CD8-positive, alpha-beta T cell (primary cell): ENCODE measurements at regions of chr2 and their contacts with region 1.

Region 1: DNA sequence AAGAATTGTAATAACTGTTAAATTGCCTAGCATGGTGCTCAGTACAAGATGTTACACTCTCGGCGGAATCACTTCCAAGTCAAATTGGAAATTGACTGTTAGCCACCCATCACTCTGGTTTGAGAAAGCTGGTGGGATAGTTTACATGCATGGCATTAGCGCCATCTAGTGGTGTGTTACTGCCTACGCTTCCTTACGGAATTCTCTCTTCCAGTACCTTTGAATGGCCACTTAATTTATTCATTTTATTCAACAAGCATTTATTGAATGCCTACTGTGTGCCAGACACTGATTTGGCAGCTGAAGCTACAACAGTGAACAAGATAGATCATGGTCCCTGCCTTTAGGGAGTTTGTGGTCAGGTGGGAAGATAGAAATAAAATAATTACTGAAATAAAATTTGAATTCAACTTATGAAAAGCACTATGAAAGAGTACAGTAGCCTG is 171.2 kb downstream of the TMEM247 start:
- DNase-seq: peak; percentile 41 to 86 (median 70)
- ATAC-seq: peak; percentile 84
- H3K4me3 ChIP-seq: no peak overlapping the region
- H3K4me3 Mint-ChIP-seq: no peak overlapping the region
- H3K27ac ChIP-seq: no peak overlapping the region
- H3K27ac Mint-ChIP-seq: no peak overlapping the region
- H3K4me1 ChIP-seq: no peaks in the 10 kb centered on the region
- H3K4me1 Mint-ChIP-seq: no peaks in the 10 kb centered on the region
- H3K27me3 ChIP-seq: no peaks in the 10 kb centered on the region
- H3K27me3 Mint-ChIP-seq: no peaks in the 10 kb centered on the region
- CTCF ChIP-seq: peak; percentile 94

Region 2: DNA sequence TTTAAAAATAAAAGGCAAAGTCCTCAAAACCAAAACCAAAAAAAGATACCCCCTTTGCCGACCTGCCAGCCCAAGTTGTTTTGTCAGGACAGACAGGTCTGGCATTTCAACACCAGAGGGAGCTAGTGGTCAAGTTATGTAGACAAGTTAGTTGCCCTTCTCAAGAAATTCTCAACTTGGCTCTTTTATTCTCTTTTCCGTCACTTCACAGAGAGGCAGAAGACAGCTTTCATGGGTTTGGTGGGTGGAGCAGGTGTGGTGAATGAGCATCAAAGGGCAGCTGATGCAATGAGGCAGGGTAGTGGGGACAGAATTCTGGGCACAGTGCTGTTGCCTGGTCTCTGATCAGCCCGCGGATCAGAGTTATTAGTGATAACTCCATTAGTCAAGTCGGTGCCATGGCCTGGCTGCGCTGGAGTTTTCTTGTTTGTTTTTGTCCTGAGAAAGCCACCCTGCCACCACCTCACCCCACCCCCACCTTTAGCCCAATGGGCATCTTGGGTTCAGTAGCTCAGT is 657.0 kb before region 1 on chr2:
- CTCF ChIA-PET with region 1: interaction called, 16 read pairs
- POLR2A ChIA-PET with region 1: interaction called, 3 read pairs
- intact Hi-C with region 1: loop called (anchors 1 to 5 kb)
- DNase-seq: peak; percentile 12 to 79 (median 58)
- ATAC-seq: peak; percentile 75
- H3K4me3 ChIP-seq: no peak overlapping the region
- H3K4me3 Mint-ChIP-seq: no peak overlapping the region
- H3K27ac ChIP-seq: no peak overlapping the region
- H3K27ac Mint-ChIP-seq: no peak overlapping the region
- H3K4me1 ChIP-seq: peaks cover 4% of the 10 kb centered on the region
- H3K4me1 Mint-ChIP-seq: peaks cover 5% of the 10 kb centered on the region
- H3K27me3 ChIP-seq: no peaks in the 10 kb centered on the region
- H3K27me3 Mint-ChIP-seq: no peaks in the 10 kb centered on the region
- CTCF ChIP-seq: peak; percentile 65

Region 3: GRCh38 chr2:46062637-46063412 is 587.8 kb before region 1 on chr2:
- CTCF ChIA-PET with region 1: interaction called, 10 read pairs
- POLR2A ChIA-PET with region 1: no interaction called
- intact Hi-C with region 1: loop called (anchors 1 to 2 kb)
- DNase-seq: peak; percentile 51 to 74 (median 70)
- ATAC-seq: peak; percentile 76
- H3K4me3 ChIP-seq: no peak overlapping the region
- H3K4me3 Mint-ChIP-seq: no peak overlapping the region
- H3K27ac ChIP-seq: no peak overlapping the region
- H3K27ac Mint-ChIP-seq: no peak overlapping the region
- H3K4me1 ChIP-seq: no peaks in the 10 kb centered on the region
- H3K4me1 Mint-ChIP-seq: peaks cover 3% of the 10 kb centered on the region
- H3K27me3 ChIP-seq: no peaks in the 10 kb centered on the region
- H3K27me3 Mint-ChIP-seq: peaks cover 3% of the 10 kb centered on the region
- CTCF ChIP-seq: peak; percentile 79

Region 4: GRCh38 chr2:46540496-46541331 is 109.9 kb before region 1 on chr2:
- CTCF ChIA-PET with region 1: interaction called, 13 read pairs
- POLR2A ChIA-PET with region 1: no interaction called
- intact Hi-C with region 1: no loop called
- DNase-seq: no peak
- ATAC-seq: no peak
- H3K4me3 ChIP-seq: peak overlapping the region in 1 of 2 experiments; percentile 52
- H3K4me3 Mint-ChIP-seq: peak overlapping the region; percentile 89
- H3K27ac ChIP-seq: peak overlapping the region; percentile 69 to 88
- H3K27ac Mint-ChIP-seq: peak overlapping the region; percentile 94
- H3K4me1 ChIP-seq: peaks cover 58% of the 10 kb centered on the region
- H3K4me1 Mint-ChIP-seq: peaks cover 82% of the 10 kb centered on the region
- H3K27me3 ChIP-seq: no peaks in the 10 kb centered on the region
- H3K27me3 Mint-ChIP-seq: no peaks in the 10 kb centered on the region
- CTCF ChIP-seq: no peak

Region 5: DNA sequence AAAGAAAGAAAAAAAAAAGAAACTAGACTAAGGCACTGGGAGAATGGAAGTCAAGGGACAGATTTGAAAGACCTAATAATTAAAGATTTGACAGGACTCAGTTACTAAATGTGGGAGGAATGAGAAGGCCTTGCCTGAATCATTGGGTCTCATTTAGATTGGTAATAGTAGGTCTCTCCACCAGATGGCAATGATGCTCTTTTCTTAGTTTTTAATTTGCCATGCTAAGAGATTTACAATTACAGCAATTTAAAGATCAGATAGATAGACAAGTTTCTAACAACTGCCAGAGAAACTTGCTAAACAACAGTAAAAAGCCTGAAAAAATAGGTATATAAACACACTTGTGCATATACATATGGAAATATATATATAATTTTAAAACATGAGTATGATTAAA is 18.2 kb before region 1 on chr2:
- CTCF ChIA-PET with region 1: interaction called, 6 read pairs
- POLR2A ChIA-PET with region 1: interaction called, 3 read pairs
- intact Hi-C with region 1: loop called in 1 of 2 experiments (anchors 1 kb)
- DNase-seq: peak in 2 of 9 experiments; percentile 29 to 47
- ATAC-seq: no peak
- H3K4me3 ChIP-seq: no peak overlapping the region
- H3K4me3 Mint-ChIP-seq: no peak overlapping the region
- H3K27ac ChIP-seq: no peak overlapping the region
- H3K27ac Mint-ChIP-seq: no peak overlapping the region
- H3K4me1 ChIP-seq: peaks cover 13% of the 10 kb centered on the region
- H3K4me1 Mint-ChIP-seq: peaks cover 19% of the 10 kb centered on the region
- H3K27me3 ChIP-seq: no peaks in the 10 kb centered on the region
- H3K27me3 Mint-ChIP-seq: no peaks in the 10 kb centered on the region
- CTCF ChIP-seq: peak; percentile 41

Region 6: GRCh38 chr2:46706264-46706983 is 55.8 kb after region 1 on chr2:
- CTCF ChIA-PET with region 1: no interaction called
- POLR2A ChIA-PET with region 1: no interaction called
- intact Hi-C with region 1: no loop called
- DNase-seq: no peak
- ATAC-seq: no peak
- H3K4me3 ChIP-seq: no peak overlapping the region
- H3K4me3 Mint-ChIP-seq: no peak overlapping the region
- H3K27ac ChIP-seq: no peak overlapping the region
- H3K27ac Mint-ChIP-seq: no peak overlapping the region
- H3K4me1 ChIP-seq: no peaks in the 10 kb centered on the region
- H3K4me1 Mint-ChIP-seq: peaks cover 47% of the 10 kb centered on the region
- H3K27me3 ChIP-seq: no peaks in the 10 kb centered on the region
- H3K27me3 Mint-ChIP-seq: no peaks in the 10 kb centered on the region
- CTCF ChIP-seq: no peak

Region 7: GRCh38 chr2:48287976-48288375 is 1637.4 kb after region 1 on chr2:
- CTCF ChIA-PET with region 1: no interaction called
- POLR2A ChIA-PET with region 1: no interaction called
- intact Hi-C with region 1: no loop called
- DNase-seq: peak in 1 of 9 experiments; percentile 5
- ATAC-seq: no peak
- H3K4me3 ChIP-seq: no peak overlapping the region
- H3K4me3 Mint-ChIP-seq: no peak overlapping the region
- H3K27ac ChIP-seq: no peak overlapping the region
- H3K27ac Mint-ChIP-seq: no peak overlapping the region
- H3K4me1 ChIP-seq: no peaks in the 10 kb centered on the region
- H3K4me1 Mint-ChIP-seq: peaks cover 7% of the 10 kb centered on the region
- H3K27me3 ChIP-seq: no peaks in the 10 kb centered on the region
- H3K27me3 Mint-ChIP-seq: no peaks in the 10 kb centered on the region
- CTCF ChIP-seq: no peak